GM10248 (cell line): ENCODE measurements at regions of chr3 and their contacts with region 1.

Region 1: DNA sequence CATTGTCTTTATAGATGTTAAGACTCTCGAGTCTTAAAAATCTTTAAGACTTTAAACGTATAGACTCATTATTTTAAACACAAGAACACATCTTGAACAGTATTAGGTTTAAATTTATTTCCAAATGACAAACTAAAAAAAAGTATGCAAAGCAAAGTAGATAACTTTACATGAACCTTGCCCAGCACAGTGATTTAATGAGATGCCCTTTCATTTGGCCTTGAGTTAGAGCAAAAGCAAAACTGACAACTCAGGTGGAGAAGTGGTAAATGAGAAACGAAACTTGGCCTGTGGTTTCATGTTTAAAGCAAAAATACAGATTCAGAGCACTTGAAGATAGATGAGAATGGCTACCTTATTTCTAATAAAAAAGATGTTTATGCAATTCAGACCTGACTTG is 8.6 kb downstream of the GPR15 start:
- DNase-seq: peak; percentile 35
- CTCF ChIP-seq: no peak

Region 2: GRCh38 chr3:98058244-98058960 is 481.9 kb before region 1 on chr3:
- CTCF ChIA-PET with region 1: no interaction called
- POLR2A ChIA-PET with region 1: no interaction called
- DNase-seq: no peak
- CTCF ChIP-seq: no peak

Region 3: GRCh38 chr3:98556164-98557130 is 16.1 kb after region 1 on chr3:
- CTCF ChIA-PET with region 1: interaction called, 27 read pairs
- POLR2A ChIA-PET with region 1: interaction called, 19 read pairs
- DNase-seq: peak; percentile 54
- CTCF ChIP-seq: no peak

Region 4: GRCh38 chr3:98563661-98564281 is 23.4 kb after region 1 on chr3:
- CTCF ChIA-PET with region 1: interaction called, 34 read pairs
- POLR2A ChIA-PET with region 1: interaction called, 22 read pairs
- DNase-seq: peak; percentile 36
- CTCF ChIP-seq: no peak

Region 5: GRCh38 chr3:98603580-98603979 is 63.2 kb after region 1 on chr3:
- CTCF ChIA-PET with region 1: no interaction called
- POLR2A ChIA-PET with region 1: no interaction called
- DNase-seq: no peak
- CTCF ChIP-seq: no peak